Activated B cell treated with CpG ODN at 0.5 μM for 24 hours (primary cell): ENCODE measurements at regions of chr3 and their contacts with region 1.

Region 1: DNA sequence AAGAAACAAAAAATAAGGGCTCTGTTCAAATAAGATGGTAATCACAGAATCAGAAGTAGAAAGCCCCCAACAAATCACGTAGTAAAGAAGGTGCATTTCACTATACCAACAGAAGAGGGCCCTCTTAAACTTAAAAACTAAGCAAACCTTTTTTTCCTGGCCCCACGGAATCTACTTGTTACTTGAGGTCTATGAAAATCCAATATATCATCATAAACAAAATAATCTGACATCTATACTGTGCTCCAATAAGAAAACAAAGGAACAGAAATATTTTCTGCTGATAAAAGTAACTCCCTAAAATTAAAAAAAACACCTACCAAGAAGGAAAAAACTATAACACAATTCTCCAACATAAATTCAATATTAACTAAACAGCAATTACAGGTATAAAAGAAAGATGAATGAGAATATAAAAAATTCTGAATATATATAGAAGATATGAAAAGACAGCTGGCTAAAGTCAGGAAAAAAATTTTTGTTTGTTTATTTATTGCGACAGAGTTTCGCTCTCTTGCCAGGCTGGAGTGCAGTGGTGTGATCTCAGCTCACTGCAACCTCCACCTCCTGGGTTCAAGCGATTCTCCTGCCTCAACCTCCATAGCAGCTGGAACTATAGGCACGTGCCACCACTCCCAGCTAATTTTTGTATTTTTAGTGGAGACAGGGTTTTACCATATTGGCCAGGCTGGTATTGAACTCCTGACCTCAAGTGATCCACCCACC is 81.8 kb downstream of the CLASP2 start:
- DNase-seq: no peak
- ATAC-seq: no peak
- H3K4me3 Mint-ChIP-seq: no peak overlapping the region
- H3K27ac Mint-ChIP-seq: no peak overlapping the region
- H3K4me1 Mint-ChIP-seq: no peaks in the 10 kb centered on the region
- H3K27me3 Mint-ChIP-seq: no peaks in the 10 kb centered on the region
- CTCF ChIP-seq: peak; percentile 31

Region 2: GRCh38 chr3:33624756-33625155 is 11.5 kb before region 1 on chr3:
- CTCF ChIA-PET with region 1: no interaction called
- POLR2A ChIA-PET with region 1: no interaction called
- intact Hi-C with region 1: no loop called
- DNase-seq: no peak
- ATAC-seq: no peak
- H3K4me3 Mint-ChIP-seq: no peak overlapping the region
- H3K27ac Mint-ChIP-seq: no peak overlapping the region
- H3K4me1 Mint-ChIP-seq: no peaks in the 10 kb centered on the region
- H3K27me3 Mint-ChIP-seq: no peaks in the 10 kb centered on the region
- CTCF ChIP-seq: no peak

Region 3: DNA sequence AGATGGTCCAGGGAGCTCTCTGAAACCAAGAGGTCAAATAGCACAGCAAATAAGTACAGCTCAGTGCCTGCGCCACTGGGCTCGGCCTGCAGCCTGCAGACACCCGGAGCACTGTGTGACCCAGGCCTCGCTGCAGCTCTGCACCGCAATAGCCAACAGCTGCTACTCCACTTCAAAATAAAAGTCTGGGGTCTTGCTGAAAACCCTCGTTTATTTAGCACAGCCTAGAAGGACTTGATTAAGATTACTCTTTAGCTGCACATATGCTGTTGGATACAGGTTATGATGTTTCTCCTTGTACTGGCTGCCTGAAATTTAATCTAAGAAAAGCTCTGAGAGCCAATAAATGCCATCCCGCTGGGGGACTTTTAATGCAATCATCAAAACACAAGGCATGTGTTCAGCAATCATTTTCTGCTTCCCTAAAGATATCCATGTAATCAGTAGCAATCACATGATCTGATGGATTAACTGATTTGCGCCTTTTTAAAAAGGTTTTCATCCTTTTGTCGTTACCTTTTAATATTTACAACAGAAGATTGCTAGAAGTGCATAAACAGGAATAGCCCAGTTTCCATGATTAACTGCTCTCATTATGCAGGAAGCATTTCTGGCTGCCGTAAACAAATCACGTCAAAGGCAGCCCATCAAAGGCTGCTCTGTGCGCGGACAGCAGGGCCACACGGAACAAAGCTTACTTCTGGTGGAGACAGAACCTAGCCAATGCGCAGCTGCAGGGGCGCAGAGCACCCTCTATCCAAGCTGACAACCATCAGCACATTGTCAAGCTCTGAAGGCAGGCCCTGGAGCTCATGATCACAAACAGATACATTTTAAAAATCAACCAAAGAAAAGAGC is 22.9 kb after region 1 on chr3:
- CTCF ChIA-PET with region 1: no interaction called
- POLR2A ChIA-PET with region 1: no interaction called
- intact Hi-C with region 1: loop called (anchors 2 kb)
- DNase-seq: no peak
- ATAC-seq: peak; percentile 83
- H3K4me3 Mint-ChIP-seq: peak overlapping the region; percentile 74
- H3K27ac Mint-ChIP-seq: peak overlapping the region; percentile 47
- H3K4me1 Mint-ChIP-seq: peaks cover 28% of the 10 kb centered on the region
- H3K27me3 Mint-ChIP-seq: no peaks in the 10 kb centered on the region
- CTCF ChIP-seq: no peak

Region 4: DNA sequence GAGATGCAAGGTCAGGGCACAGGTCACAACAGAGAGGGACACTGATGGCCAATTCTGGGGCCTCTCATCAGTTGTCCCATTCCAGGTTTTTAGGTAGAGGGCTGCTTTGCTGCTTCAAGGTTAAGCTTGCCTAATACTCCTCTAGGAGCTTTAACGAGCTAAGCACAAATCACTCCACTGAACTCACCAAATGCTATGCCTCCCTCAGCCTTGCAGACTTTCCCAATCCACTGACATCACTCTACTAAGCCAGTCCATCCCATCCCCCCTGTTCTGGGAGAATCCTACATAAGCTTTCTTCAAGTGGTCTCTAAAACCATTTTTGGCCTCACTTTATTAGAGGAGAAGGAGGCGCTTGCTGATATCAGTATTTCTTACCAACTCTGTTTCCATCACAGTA is 137.3 kb after region 1 on chr3:
- CTCF ChIA-PET with region 1: interaction called, 17 read pairs
- POLR2A ChIA-PET with region 1: no interaction called
- intact Hi-C with region 1: loop called (anchors 1 kb)
- DNase-seq: no peak
- ATAC-seq: no peak
- H3K4me3 Mint-ChIP-seq: no peak overlapping the region
- H3K27ac Mint-ChIP-seq: no peak overlapping the region
- H3K4me1 Mint-ChIP-seq: no peaks in the 10 kb centered on the region
- H3K27me3 Mint-ChIP-seq: peaks cover 2% of the 10 kb centered on the region
- CTCF ChIP-seq: no peak